ENCODE measurements at regions of chr5 and their contacts with region 1.

Region 1: GRCh38 chr5:177497292-177498033 is at the start of gene PDLIM7:
- DNase-seq: peak; percentile 95
- H3K4me3 Mint-ChIP-seq: peak within 1 kb of the TSS; percentile 81
- H3K27ac Mint-ChIP-seq: no peak within 1 kb of the TSS
- H3K4me1 Mint-ChIP-seq: peaks cover 36% of the 10 kb centered on the region
- H3K27me3 Mint-ChIP-seq: peaks cover 32% of the 10 kb centered on the region

Region 2: GRCh38 chr5:177194274-177194673 is 303.2 kb before region 1 on chr5:
- CTCF ChIA-PET with region 1: no interaction called
- DNase-seq: no peak
- H3K4me3 Mint-ChIP-seq: no peak overlapping the region
- H3K27ac Mint-ChIP-seq: no peak overlapping the region
- H3K4me1 Mint-ChIP-seq: peaks cover 10% of the 10 kb centered on the region
- H3K27me3 Mint-ChIP-seq: no peaks in the 10 kb centered on the region

Region 3: DNA sequence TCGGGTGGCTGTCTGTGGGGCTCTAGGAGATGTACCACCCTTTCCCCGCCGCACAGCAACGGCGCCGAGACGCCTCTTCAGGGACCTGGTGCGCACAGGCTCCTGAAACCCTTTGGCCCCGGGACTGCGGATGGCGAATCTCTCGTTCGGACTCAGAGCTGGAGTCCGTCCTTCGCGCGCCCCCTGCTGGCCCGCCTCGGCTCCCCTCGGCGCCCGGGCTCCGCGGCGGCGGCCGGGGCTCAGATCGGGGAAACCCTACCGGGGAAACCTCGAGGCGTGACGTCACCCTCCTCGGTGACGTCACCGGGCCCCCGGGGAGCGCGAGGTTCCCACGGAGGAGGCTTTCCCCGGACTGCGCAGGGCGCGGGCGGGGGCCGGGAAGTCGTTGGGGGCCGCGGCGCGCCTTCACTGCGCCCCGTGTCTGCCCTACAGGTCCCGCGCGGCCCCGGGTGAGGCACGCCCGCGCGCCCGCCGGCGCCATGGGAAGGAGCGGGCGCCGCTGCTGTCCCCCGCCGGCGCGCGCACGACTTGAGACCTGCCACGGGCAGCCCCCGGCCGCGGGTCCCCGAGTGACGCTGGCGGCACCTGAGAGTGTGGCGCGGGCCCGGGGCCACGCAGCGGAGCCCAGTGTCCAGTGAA is 42.9 kb before region 1 on chr5:
- CTCF ChIA-PET with region 1: interaction called, 16 read pairs
- DNase-seq: peak; percentile 92
- H3K4me3 Mint-ChIP-seq: peak overlapping the region; percentile 80
- H3K27ac Mint-ChIP-seq: peak overlapping the region; percentile 84
- H3K4me1 Mint-ChIP-seq: peaks cover 29% of the 10 kb centered on the region
- H3K27me3 Mint-ChIP-seq: peaks cover 44% of the 10 kb centered on the region

Region 4: DNA sequence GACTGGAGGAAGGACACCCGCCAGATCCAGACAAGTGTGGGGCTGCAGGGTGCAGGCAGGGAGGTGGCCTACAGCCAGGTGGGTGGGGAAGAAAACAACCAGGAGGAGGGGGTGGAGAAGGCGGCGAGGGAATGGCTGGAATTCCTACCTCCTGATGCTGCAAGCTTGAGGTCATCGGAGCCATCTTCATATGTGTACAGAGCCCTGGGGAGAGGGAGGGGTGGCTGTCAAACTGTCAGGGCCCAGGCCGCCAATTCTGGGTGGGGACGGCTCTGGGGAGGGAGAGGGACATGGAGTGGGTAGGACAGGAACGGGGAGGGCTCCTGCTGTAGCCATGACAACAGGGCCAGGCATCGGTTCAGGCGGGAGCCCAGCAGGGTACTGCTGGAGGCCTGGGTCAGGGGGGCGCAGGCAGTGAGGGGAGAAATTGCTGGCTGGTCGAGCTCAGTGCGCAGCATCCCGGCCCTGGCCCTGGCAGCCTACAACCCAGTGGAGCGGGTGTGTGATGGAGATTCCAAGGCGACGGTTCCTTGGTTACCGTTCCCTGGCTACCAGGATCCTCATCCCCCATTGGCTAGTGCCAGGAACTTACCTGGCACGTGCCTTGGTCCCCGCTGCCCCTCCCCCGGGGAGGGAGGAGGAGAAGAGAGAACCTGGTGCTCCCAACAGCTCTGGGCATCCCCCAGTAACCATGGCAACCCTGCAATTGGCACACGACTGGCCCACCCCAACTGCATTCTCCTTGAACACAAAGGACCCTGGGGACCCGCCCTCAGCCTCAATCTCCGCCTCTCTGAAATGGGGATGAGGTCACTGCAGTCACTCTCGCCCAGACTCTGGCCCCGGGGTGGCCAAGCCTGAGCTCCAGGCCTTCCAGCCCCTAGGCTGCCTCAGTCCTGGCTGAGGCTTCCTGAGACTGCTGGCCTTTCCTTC is 28.5 kb before region 1 on chr5:
- CTCF ChIA-PET with region 1: interaction called, 11 read pairs
- DNase-seq: no peak
- H3K4me3 Mint-ChIP-seq: no peak overlapping the region
- H3K27ac Mint-ChIP-seq: no peak overlapping the region
- H3K4me1 Mint-ChIP-seq: peaks cover 18% of the 10 kb centered on the region
- H3K27me3 Mint-ChIP-seq: peaks cover 50% of the 10 kb centered on the region

Region 5: GRCh38 chr5:177478711-177479646 is 18.5 kb before region 1 on chr5:
- CTCF ChIA-PET with region 1: interaction called, 19 read pairs
- DNase-seq: peak; percentile 49
- H3K4me3 Mint-ChIP-seq: no peak overlapping the region
- H3K27ac Mint-ChIP-seq: peak overlapping the region; percentile 88
- H3K4me1 Mint-ChIP-seq: peaks cover 45% of the 10 kb centered on the region
- H3K27me3 Mint-ChIP-seq: peaks cover 23% of the 10 kb centered on the region

Region 6: GRCh38 chr5:178104492-178104891 is 607.0 kb after region 1 on chr5:
- CTCF ChIA-PET with region 1: no interaction called
- DNase-seq: no peak
- H3K4me3 Mint-ChIP-seq: no peak overlapping the region
- H3K27ac Mint-ChIP-seq: no peak overlapping the region
- H3K4me1 Mint-ChIP-seq: peaks cover 15% of the 10 kb centered on the region
- H3K27me3 Mint-ChIP-seq: peaks cover 41% of the 10 kb centered on the region

Measured in activated naive CD4-positive, alpha-beta T cell treated with anti-CD3 and anti-CD28 coated beads, Interleukin-2, amount 10 ng/mL, durations not matched to agents 7 days and 5 days (primary cell).